CD8-positive, alpha-beta T cell (primary cell): ENCODE measurements at regions of chr14 and their contacts with region 1.

Region 1: GRCh38 chr14:68939893-68940613 is 39.0 kb downstream of the ACTN1 start:
- DNase-seq: peak in 1 of 9 experiments; percentile 44
- ATAC-seq: peak; percentile 43
- H3K4me3 ChIP-seq: no peak overlapping the region
- H3K4me3 Mint-ChIP-seq: peak overlapping the region; percentile 61
- H3K27ac ChIP-seq: peak overlapping the region; percentile 24 to 55
- H3K27ac Mint-ChIP-seq: peak overlapping the region; percentile 88
- H3K4me1 ChIP-seq: peaks cover 97% of the 10 kb centered on the region
- H3K4me1 Mint-ChIP-seq: peaks cover 87% of the 10 kb centered on the region
- H3K27me3 ChIP-seq: no peaks in the 10 kb centered on the region
- H3K27me3 Mint-ChIP-seq: no peaks in the 10 kb centered on the region
- CTCF ChIP-seq: no peak

Region 2: GRCh38 chr14:68816262-68816942 is 123.7 kb before region 1 on chr14:
- CTCF ChIA-PET with region 1: no interaction called
- POLR2A ChIA-PET with region 1: no interaction called
- intact Hi-C with region 1: no loop called
- DNase-seq: peak; percentile 82 to 97 (median 91)
- ATAC-seq: peak; percentile 76
- H3K4me3 ChIP-seq: peak overlapping the region; percentile 59 to 69
- H3K4me3 Mint-ChIP-seq: peak overlapping the region; percentile 79
- H3K27ac ChIP-seq: peak overlapping the region; percentile 77 to 91
- H3K27ac Mint-ChIP-seq: peak overlapping the region; percentile 98
- H3K4me1 ChIP-seq: peaks cover 66% of the 10 kb centered on the region
- H3K4me1 Mint-ChIP-seq: peaks cover 68% of the 10 kb centered on the region
- H3K27me3 ChIP-seq: no peaks in the 10 kb centered on the region
- H3K27me3 Mint-ChIP-seq: no peaks in the 10 kb centered on the region
- CTCF ChIP-seq: peak; percentile 95

Region 3: DNA sequence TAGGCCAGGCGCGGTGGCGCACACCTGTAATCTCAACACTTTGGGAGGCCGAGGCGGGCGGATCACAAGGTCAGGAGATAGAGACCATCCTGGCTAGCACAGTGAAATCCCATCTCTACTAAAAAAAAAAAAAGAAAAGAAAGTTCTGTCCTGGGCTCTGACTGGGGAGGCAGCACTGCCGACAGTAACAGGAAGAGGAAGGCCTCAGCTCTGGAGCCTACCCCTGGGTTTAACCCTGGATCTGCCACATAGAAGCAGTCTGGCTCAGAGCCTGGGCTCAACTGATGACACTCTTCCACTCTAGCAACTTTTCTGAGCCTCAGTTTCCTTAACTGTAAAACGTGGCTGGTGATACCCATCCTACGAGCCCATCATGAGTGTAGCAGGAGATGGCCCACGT is 21.4 kb before region 1 on chr14:
- CTCF ChIA-PET with region 1: interaction called, 4 read pairs
- POLR2A ChIA-PET with region 1: interaction called, 3 read pairs
- intact Hi-C with region 1: loop called in 1 of 2 experiments (anchors 2 kb)
- DNase-seq: peak in 1 of 9 experiments; percentile 33
- ATAC-seq: peak; percentile 86
- H3K4me3 ChIP-seq: no peak overlapping the region
- H3K4me3 Mint-ChIP-seq: peak overlapping the region; percentile 22
- H3K27ac ChIP-seq: no peak overlapping the region
- H3K27ac Mint-ChIP-seq: peak overlapping the region; percentile 89
- H3K4me1 ChIP-seq: peaks cover 50% of the 10 kb centered on the region
- H3K4me1 Mint-ChIP-seq: peaks cover 60% of the 10 kb centered on the region
- H3K27me3 ChIP-seq: no peaks in the 10 kb centered on the region
- H3K27me3 Mint-ChIP-seq: no peaks in the 10 kb centered on the region
- CTCF ChIP-seq: no peak

Region 4: GRCh38 chr14:68970038-68970612 is 30.1 kb after region 1 on chr14:
- CTCF ChIA-PET with region 1: interaction called, 4 read pairs
- POLR2A ChIA-PET with region 1: interaction called, 15 read pairs
- intact Hi-C with region 1: no loop called
- DNase-seq: peak; percentile 30 to 86 (median 64)
- ATAC-seq: peak; percentile 59
- H3K4me3 ChIP-seq: peak overlapping the region; percentile 3 to 31
- H3K4me3 Mint-ChIP-seq: peak overlapping the region; percentile 81
- H3K27ac ChIP-seq: peak overlapping the region; percentile 67 to 73
- H3K27ac Mint-ChIP-seq: peak overlapping the region; percentile 93
- H3K4me1 ChIP-seq: peaks cover 97% of the 10 kb centered on the region
- H3K4me1 Mint-ChIP-seq: peaks cover 97% of the 10 kb centered on the region
- H3K27me3 ChIP-seq: no peaks in the 10 kb centered on the region
- H3K27me3 Mint-ChIP-seq: no peaks in the 10 kb centered on the region
- CTCF ChIP-seq: no peak

Region 5: DNA sequence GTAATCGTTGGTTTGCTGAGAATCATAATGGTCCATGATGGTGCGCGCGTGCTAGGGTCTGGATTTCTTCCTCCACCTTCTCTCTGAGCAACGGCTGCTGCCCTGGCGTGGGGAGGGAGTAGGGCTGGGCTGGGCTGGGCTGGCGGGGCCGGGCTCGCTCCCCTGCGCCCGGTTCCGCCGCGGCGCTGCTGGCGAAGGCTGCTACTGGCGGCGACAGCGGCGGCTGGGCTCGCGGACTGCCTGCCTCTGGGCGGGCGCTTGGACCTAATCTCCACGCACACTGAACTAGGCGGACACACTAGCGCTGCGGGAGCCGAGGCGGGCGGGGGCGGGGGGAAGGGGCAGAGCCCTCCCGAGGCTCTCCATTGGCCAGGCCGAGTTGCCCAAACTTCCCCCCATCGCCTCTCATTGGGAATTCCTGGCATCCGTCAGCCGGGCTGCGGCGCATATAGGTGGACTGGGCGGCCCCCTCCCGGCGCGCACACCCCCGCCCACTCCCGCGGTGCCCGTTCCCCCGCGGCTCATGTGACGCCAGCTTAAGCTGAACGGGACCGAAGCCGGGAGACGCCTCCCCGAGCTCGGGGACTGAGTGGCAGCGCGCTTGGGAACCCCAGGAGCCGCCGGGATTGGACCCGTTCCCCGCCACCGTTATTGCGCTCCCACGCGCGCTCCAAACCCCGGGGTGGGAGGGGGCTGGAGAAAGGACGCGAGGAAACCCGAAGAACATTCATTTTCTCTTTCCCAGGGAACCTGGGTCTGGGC is 39.1 kb after region 1 on chr14 and contains the start of gene ACTN1:
- CTCF ChIA-PET with region 1: interaction called, 8 read pairs
- POLR2A ChIA-PET with region 1: interaction called, 6 read pairs
- intact Hi-C with region 1: loop called (anchors 2 kb)
- DNase-seq: peak; percentile 22 to 87 (median 72)
- ATAC-seq: peak; percentile 52
- H3K4me3 ChIP-seq: peak within 1 kb of the TSS; percentile 79 to 86
- H3K4me3 Mint-ChIP-seq: peak within 1 kb of the TSS; percentile 94
- H3K27ac ChIP-seq: peak within 1 kb of the TSS; percentile 48 to 70
- H3K27ac Mint-ChIP-seq: peak within 1 kb of the TSS; percentile 93
- H3K4me1 ChIP-seq: peaks cover 45% of the 10 kb centered on the region
- H3K4me1 Mint-ChIP-seq: peaks cover 58% of the 10 kb centered on the region
- H3K27me3 ChIP-seq: no peaks in the 10 kb centered on the region
- H3K27me3 Mint-ChIP-seq: no peaks in the 10 kb centered on the region
- CTCF ChIP-seq: no peak
- total RNA-seq, gene ACTN1: 153 to 161 TPM